MCF 10A (cell line): ENCODE measurements at regions of chr20 and their contacts with region 1.

Region 1: GRCh38 chr20:39112178-39112743 is 150.1 kb downstream of the DHX35 start:
- DNase-seq: peak; percentile 50
- H3K4me3 Mint-ChIP-seq: no peak overlapping the region
- H3K27ac Mint-ChIP-seq: no peak overlapping the region
- H3K4me1 Mint-ChIP-seq: peaks cover 5% of the 10 kb centered on the region
- H3K27me3 Mint-ChIP-seq: peaks cover 36% of the 10 kb centered on the region
- CTCF ChIP-seq: peak; percentile 88

Region 2: GRCh38 chr20:39124064-39124463 is 11.8 kb after region 1 on chr20:
- CTCF ChIA-PET with region 1: interaction called, 23 read pairs
- POLR2A ChIA-PET with region 1: no interaction called
- intact Hi-C with region 1: no loop called
- DNase-seq: peak; percentile 45
- H3K4me3 Mint-ChIP-seq: no peak overlapping the region
- H3K27ac Mint-ChIP-seq: no peak overlapping the region
- H3K4me1 Mint-ChIP-seq: peaks cover 6% of the 10 kb centered on the region
- H3K27me3 Mint-ChIP-seq: peaks cover 12% of the 10 kb centered on the region
- CTCF ChIP-seq: no peak

Region 3: DNA sequence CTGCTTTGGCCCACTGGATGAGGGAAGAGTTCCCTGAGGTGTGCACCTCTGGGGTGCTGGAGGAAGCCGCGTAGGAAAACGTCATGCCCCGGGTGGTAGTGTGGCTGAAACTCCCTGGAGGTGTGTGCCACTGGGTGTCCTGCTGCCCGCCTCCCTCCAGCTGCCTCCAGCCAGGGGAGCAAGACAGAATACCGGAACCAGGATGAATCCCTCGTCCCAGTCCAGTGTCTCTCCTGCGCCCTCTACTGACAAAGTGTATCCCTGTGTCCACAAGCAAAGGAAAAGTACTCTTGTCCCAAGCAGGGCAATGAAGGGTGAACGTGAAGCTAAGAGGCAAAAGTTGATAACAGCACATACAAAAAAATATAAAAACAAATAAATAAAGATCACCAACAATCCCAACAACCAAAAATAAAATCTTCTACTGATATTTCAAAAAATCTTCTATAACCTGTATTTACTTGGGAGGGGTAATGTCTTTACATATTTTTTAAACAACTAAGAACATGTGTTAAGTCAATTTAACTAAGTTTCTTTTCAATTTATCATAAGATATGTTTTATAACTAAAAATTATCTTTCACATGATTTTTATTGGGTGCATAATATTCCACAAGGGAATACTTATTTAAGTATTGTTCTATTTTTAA is 1139.1 kb after region 1 on chr20:
- CTCF ChIA-PET with region 1: interaction called, 6 read pairs
- POLR2A ChIA-PET with region 1: no interaction called
- intact Hi-C with region 1: loop called (anchors 5 kb)
- DNase-seq: peak; percentile 76
- H3K4me3 Mint-ChIP-seq: no peak overlapping the region
- H3K27ac Mint-ChIP-seq: no peak overlapping the region
- H3K4me1 Mint-ChIP-seq: peaks cover 8% of the 10 kb centered on the region
- H3K27me3 Mint-ChIP-seq: no peaks in the 10 kb centered on the region
- CTCF ChIP-seq: peak; percentile 52